Endothelial cell of umbilical vein (primary cell): ENCODE measurements at regions of chr6 and their contacts with region 1.

Region 1: DNA sequence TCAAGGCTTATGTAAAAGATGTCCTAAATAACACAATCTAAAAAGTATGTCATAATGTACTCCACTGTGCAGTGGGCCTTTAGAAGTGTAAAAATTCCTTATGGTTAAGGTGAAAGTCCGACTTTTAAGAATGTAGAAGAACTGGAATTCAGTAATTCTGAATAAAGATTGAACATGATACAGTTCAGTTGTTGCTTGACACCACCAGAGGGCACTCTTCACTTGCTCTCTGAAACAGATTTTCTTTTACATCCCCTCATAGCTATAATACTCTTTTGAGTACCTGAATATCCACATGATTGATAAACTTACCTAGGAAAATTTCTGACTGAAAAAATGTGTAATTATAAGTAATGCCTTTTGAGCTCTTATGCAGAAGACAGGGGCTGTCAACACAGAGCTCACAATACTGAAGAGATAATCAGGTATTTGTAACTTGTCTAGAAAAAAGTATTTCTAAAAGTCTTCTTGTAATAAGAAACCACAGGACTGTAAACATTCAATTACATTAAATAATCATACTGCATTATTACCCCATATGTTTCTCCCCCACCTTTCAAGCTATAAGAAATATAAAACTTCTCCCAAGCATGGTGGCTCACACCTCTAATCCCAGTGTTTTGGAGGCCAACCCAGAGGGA is 92.1 kb downstream of the POPDC3 start:
- DNase-seq: peak; percentile 54
- H3K4me3 ChIP-seq: no peak overlapping the region
- H3K27ac ChIP-seq: no peak overlapping the region
- H3K4me1 ChIP-seq: no peaks in the 10 kb centered on the region
- H3K27me3 ChIP-seq: peaks cover 0 to 2% of the 10 kb centered on the region in 2 experiments
- CTCF ChIP-seq: peak; percentile 52 to 59
- POLR2A ChIP-seq: no peak

Region 2: GRCh38 chr6:104281370-104281769 is 806.3 kb before region 1 on chr6:
- CTCF ChIA-PET with region 1: no interaction called
- POLR2A ChIA-PET with region 1: no interaction called
- dilution Hi-C with region 1: no loop called
- intact Hi-C with region 1: no loop called
- DNase-seq: no peak
- H3K4me3 ChIP-seq: no peak overlapping the region
- H3K27ac ChIP-seq: no peak overlapping the region
- H3K4me1 ChIP-seq: no peaks in the 10 kb centered on the region
- H3K27me3 ChIP-seq: no peaks in the 10 kb centered on the region
- CTCF ChIP-seq: no peak
- POLR2A ChIP-seq: no peak

Region 3: DNA sequence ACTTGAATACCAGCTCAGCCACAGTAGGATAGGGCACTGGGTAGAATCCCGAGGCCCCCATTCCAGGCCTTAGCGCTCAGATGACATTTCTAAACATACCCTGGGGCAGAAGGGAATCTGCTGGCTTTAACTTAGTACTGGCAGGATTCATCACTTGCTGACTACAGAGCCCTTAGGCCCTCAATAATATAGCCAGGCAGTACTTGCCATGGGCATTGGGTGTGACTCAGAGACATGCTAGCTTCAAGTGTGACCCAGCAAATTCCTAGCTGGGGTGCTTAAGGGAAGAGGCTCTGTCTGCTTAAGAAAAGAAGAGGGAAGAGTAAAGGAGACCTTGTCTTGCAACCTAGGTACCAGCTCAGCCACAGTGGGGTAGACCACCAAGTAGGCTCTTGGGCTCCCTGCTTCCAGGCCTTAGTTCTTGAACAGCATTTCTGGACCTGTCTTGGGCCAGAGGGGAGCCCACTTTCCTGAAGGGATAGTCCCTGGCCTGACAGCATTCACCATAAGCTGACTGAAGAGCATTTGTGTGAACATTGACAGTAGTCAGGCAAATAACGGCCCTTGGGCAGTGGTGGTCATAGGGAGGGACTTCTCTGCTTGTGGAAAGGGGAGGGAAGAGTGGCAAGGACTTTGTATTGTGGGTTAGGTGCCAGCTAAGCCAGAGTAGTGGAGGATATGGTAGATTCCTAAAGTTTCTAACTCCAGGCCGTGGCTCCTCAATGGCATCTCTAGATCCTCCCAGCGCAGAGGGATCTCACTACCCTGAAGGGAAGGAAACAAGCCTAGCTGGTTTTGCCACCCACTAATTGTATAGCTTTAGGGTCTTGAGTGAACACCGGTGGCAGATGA is 179.4 kb before region 1 on chr6:
- CTCF ChIA-PET with region 1: no interaction called
- POLR2A ChIA-PET with region 1: no interaction called
- dilution Hi-C with region 1: no loop called
- intact Hi-C with region 1: no loop called
- DNase-seq: no peak
- H3K4me3 ChIP-seq: no peak overlapping the region
- H3K27ac ChIP-seq: no peak overlapping the region
- H3K4me1 ChIP-seq: no peaks in the 10 kb centered on the region
- H3K27me3 ChIP-seq: no peaks in the 10 kb centered on the region
- CTCF ChIP-seq: no peak
- POLR2A ChIP-seq: no peak

Region 4: DNA sequence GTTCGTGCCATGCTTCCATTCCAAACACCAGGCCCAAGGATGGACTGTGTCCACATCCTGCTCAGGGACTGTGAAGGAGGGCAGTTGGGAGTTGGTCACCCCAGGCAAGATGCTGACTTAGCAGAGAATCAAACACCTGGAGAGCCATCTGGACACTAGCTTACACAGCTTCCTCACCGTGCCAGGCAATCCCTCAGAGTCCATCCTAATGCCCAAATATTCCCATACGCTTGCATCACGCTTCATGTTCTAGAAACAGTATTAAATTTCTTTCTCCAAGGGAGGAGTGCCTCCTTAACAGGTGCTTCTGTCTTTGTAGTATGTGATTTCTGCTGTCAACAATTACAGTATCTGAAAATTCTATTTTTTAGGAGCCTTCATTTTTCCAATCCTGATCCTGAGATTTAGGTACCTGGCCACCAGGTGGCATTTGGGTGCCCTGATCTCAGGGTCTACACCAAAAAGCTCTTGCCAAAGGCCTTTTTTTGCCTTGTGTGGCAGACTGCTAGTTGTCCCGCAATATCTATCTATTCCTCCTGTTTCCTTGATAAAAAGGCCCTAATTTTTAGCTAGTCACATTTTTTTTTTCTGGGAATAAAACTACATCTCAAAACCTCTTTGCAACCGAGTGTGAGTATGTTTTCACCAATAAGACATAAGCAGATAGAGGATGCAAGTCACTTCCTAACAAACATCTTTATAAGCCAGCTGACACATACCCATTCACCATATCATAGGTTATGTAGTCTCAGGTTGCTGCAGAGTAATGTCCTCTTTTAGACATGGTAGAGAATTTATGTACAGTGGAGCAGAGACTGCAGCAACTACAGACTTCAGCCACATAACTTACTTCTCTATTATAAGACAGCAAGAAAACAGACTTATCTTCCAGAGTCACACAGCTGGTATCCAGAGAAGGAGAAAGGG is 230.2 kb after region 1 on chr6:
- CTCF ChIA-PET with region 1: interaction called, 11 read pairs
- POLR2A ChIA-PET with region 1: no interaction called
- dilution Hi-C with region 1: no loop called
- intact Hi-C with region 1: loop called (anchors 5 kb)
- DNase-seq: peak; percentile 2
- H3K4me3 ChIP-seq: no peak overlapping the region
- H3K27ac ChIP-seq: no peak overlapping the region
- H3K4me1 ChIP-seq: no peaks in the 10 kb centered on the region
- H3K27me3 ChIP-seq: no peaks in the 10 kb centered on the region
- CTCF ChIP-seq: peak; percentile 11 to 25
- POLR2A ChIP-seq: no peak

Region 5: DNA sequence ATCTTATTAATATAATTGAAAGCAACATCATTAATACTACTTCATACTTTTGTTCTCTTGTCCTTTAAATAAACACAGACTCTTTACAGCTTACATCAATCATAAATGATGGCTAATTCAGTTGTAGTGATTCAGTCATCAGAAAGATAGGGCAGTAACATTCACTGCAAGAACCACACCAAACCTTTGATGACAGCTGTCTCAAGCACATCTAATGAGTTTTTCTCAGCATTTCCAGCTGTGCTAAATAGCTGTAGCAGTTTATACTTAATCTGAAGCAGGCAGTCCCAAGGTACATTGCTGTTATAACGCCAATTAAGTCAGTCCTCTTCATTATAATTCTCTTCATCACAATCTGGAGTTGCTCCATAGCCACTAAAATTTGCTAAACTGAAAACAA is 269.5 kb after region 1 on chr6:
- CTCF ChIA-PET with region 1: interaction called, 160 read pairs
- POLR2A ChIA-PET with region 1: no interaction called
- dilution Hi-C with region 1: no loop called
- intact Hi-C with region 1: no loop called
- DNase-seq: no peak
- H3K4me3 ChIP-seq: no peak overlapping the region
- H3K27ac ChIP-seq: no peak overlapping the region
- H3K4me1 ChIP-seq: peaks cover 6% of the 10 kb centered on the region
- H3K27me3 ChIP-seq: no peaks in the 10 kb centered on the region
- CTCF ChIP-seq: no peak
- POLR2A ChIP-seq: no peak

Region 6: DNA sequence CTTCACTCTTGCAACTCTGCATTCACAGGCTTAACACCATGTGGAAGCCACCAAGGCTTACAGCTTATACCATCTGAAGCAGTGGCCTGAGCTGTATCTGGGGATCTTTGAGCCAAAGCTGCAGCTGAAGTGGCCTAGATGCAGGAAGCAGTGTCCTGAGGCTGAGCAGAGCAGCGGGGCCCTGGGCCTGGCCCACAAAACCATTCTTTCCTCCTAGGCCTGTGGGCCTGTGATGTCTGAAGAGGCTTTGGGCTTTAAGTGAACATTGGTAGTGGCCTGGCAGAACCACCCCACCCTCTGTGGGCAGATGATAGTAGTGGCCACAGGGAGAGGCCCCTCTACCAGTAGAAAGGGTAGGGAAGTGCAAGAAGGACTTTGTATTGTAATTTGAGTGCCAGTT is 322.0 kb after region 1 on chr6:
- CTCF ChIA-PET with region 1: interaction called, 12 read pairs
- POLR2A ChIA-PET with region 1: no interaction called
- dilution Hi-C with region 1: loop called (anchors 25 kb)
- intact Hi-C with region 1: no loop called
- DNase-seq: no peak
- H3K4me3 ChIP-seq: no peak overlapping the region
- H3K27ac ChIP-seq: no peak overlapping the region
- H3K4me1 ChIP-seq: no peaks in the 10 kb centered on the region
- H3K27me3 ChIP-seq: peaks cover 2 to 3% of the 10 kb centered on the region in 2 experiments
- CTCF ChIP-seq: no peak
- POLR2A ChIP-seq: no peak